ENCODE measurements at regions of chr6 and their contacts with region 1.

Region 1: GRCh38 chr6:53492860-53493634 is 51.9 kb downstream of the GCLC start:
- DNase-seq: no peak
- ATAC-seq: peak; percentile 59 to 89 (median 72)
- H3K4me3 ChIP-seq: peak overlapping the region; percentile 59
- H3K27ac ChIP-seq: peak overlapping the region; percentile 54
- H3K4me1 ChIP-seq: peaks cover 11% of the 10 kb centered on the region
- H3K27me3 ChIP-seq: no peaks in the 10 kb centered on the region
- CTCF ChIP-seq: peak; percentile 75

Region 2: DNA sequence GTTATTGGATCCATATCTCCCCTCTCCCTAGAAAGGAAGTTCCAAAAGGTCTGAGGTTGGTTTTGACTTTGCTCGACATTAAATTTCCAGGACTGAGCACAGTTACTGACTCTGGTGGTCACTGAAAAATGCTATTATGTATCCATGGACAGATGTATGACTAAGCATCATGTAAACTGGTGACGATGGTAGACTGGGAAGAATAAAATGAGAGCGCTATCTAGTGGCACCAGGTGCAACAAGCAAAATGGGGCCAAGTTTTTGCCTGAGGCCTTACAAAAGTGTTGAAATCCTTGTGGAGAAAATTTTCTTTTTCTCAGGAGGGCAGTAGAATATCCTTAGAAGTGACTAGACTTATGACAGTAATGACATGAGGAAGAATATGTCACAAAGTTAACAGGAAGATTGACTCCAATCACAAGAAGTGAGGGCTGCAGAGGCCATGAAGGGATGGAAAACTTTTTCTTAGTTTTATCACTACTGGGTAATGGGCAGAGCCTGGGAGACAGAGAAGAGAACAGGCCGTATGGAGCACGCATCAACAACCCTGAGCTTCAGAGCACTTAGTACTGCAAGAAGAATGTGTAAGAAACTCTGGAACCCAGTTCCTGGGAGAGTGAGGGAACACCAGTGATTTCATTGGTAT is 55.4 kb before region 1 on chr6:
- intact Hi-C with region 1: no loop called
- DNase-seq: no peak
- ATAC-seq: peak in 2 of 4 donors; percentile 44 to 61
- H3K4me3 ChIP-seq: no peak overlapping the region
- H3K27ac ChIP-seq: no peak overlapping the region
- H3K4me1 ChIP-seq: no peaks in the 10 kb centered on the region
- H3K27me3 ChIP-seq: peaks cover 0 to 2% (median 0%) of the 10 kb centered on the region in 3 donors
- CTCF ChIP-seq: peak; percentile 31

Region 3: DNA sequence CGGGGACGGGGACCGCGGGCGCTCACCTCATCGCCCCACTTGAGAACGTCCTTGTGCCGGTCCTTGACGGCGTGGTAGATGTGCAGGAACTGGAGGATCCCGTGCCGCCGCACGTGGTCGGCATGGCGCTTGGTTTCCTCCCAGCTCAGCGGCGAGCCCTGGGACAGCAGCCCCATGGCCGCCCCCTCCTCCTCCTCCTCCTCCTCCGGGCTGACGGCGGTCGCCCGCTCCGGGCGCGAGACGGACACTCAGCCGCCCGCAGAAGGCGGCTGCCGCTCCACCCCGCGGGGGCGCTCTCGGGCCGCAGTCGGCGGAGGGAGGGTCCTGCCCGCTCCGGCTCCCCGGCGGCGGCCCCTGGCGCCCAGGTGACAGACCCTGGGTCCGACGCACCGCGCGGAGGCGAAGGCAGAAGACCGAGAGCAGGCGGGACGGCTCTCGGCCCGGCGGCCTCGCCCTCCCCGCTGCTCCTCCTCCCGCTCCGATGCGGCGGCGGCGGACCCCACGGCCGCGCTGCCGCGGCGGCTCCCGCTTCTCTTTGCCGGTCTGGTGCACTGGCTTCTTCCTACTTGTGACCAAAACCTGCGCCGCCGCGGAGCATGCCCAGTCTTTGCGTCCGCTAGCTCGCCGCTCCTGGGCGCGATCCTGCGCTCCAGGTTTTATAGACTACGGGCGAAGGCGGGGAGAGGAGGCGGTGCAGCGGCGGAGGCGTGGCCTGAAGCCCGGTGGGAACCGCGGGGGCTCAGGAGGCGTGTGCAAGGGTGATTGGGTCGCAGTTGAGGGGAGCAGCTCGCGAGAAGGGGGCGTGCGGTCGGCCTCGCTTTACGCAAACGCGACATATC is 51.6 kb after region 1 on chr6 and contains the start of gene GCLC:
- intact Hi-C with region 1: loop called in 1 of 2 experiments (anchors 10 kb)
- DNase-seq: peak; percentile 95 to 97
- ATAC-seq: peak; percentile 79 to 82 (median 80)
- H3K4me3 ChIP-seq: peak within 1 kb of the TSS; percentile 75
- H3K27ac ChIP-seq: peak within 1 kb of the TSS; percentile 96
- H3K4me1 ChIP-seq: peaks cover 40% of the 10 kb centered on the region
- H3K27me3 ChIP-seq: no peaks in the 10 kb centered on the region
- CTCF ChIP-seq: peak; percentile 71
- total RNA-seq, gene GCLC: 14.0 to 31.9 (median 22.8) TPM

Region 4: DNA sequence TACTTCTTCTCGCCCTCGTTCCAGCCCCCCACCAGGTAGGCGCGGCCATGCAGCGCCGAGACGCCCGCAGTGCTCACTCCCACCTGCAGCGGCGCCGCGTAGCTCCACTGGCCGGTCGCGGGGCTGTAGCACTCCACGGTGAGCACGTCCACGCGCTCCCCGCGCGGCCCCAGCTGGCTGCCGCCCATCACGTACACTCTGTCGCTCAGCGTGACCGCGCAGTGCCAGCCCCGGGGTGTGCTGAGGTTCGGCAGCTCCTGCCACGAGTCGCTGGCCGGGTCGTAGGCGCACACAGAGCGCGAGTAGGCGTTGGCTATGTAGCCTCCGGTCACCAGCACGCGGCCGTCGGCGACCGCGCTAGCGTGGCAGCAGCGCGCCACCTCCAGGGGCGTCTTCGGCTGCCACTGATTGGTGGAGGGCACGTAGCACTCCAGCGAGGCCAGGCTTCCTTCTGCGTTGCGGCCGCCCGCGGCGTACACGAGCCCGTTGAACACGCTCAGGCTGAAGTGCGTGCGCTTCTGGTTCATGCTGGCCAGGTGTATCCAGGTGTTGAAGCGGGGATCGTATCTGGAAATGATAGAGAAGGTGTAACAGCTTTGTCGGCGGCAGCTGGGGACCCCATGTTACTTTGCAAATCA is 158.8 kb after region 1 on chr6:
- intact Hi-C with region 1: loop called (anchors 2 to 5 kb)
- DNase-seq: peak; percentile 73 to 86
- ATAC-seq: peak; percentile 87 to 92 (median 90)
- H3K4me3 ChIP-seq: peak overlapping the region; percentile 67
- H3K27ac ChIP-seq: peak overlapping the region; percentile 79
- H3K4me1 ChIP-seq: peaks cover 66% of the 10 kb centered on the region
- H3K27me3 ChIP-seq: no peaks in the 10 kb centered on the region
- CTCF ChIP-seq: peak; percentile 29

Measured in psoas muscle (tissue), 8 donors.